Activated CD4-positive, alpha-beta T cell treated with anti-CD3 and anti-CD28 coated beads, Interleukin-2, amount 10 ng/mL, durations not matched to agents 24 days and 14 days (primary cell): ENCODE measurements at regions of chr2 and their contacts with region 1.

Region 1: DNA sequence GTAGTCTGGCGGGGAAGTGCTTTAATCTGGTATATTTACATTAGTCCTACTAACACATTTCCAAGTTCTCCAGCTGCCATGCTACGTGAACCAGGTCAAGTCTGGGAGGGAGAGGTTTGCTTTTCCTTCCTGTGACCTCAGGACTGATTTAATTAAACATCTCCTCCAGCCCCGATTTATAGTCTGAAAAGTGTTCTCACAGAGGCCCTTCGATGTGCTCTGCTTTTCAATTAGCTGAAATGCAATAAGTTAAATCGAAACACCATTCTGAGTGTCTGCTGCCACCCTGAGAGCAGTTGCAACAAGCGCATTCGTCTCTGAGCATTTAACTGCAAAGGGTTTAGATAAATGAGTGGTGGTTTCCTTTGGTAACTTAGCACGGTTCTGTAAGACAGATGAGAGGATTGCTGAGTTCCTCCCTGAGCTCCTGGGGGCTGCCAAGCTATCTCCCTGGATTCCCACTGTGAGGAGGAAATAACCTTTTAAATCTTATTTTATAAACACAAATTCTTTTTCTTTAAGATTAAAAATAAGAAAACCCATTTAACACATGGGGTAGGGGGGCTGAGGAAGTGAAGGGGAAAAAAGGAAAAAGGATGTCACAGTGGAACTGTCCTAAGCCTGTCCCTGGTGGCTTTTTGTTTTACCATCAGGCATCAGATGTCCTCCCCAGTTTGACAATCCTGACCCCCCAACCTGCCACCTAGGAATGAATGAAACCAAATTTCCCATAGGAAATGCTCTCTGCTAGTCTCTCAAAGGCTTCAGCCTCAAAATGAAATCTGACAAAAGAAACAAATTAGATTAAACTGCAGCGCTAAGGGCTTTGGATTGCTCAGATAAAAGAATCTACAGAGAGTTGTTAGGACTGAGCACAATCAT is 56.5 kb upstream of the CREB1 start:
- DNase-seq: peak; percentile 86
- H3K4me3 Mint-ChIP-seq: no peak overlapping the region
- H3K27ac Mint-ChIP-seq: peak overlapping the region; percentile 26
- H3K4me1 Mint-ChIP-seq: peaks cover 17% of the 10 kb centered on the region
- H3K27me3 Mint-ChIP-seq: peaks cover 2% of the 10 kb centered on the region

Region 2: GRCh38 chr2:206693399-206694137 is 779.7 kb before region 1 on chr2:
- intact Hi-C with region 1: loop called (anchors 1 kb)
- DNase-seq: peak; percentile 82
- H3K4me3 Mint-ChIP-seq: no peak overlapping the region
- H3K27ac Mint-ChIP-seq: no peak overlapping the region
- H3K4me1 Mint-ChIP-seq: no peaks in the 10 kb centered on the region
- H3K27me3 Mint-ChIP-seq: peaks cover 6% of the 10 kb centered on the region

Region 3: DNA sequence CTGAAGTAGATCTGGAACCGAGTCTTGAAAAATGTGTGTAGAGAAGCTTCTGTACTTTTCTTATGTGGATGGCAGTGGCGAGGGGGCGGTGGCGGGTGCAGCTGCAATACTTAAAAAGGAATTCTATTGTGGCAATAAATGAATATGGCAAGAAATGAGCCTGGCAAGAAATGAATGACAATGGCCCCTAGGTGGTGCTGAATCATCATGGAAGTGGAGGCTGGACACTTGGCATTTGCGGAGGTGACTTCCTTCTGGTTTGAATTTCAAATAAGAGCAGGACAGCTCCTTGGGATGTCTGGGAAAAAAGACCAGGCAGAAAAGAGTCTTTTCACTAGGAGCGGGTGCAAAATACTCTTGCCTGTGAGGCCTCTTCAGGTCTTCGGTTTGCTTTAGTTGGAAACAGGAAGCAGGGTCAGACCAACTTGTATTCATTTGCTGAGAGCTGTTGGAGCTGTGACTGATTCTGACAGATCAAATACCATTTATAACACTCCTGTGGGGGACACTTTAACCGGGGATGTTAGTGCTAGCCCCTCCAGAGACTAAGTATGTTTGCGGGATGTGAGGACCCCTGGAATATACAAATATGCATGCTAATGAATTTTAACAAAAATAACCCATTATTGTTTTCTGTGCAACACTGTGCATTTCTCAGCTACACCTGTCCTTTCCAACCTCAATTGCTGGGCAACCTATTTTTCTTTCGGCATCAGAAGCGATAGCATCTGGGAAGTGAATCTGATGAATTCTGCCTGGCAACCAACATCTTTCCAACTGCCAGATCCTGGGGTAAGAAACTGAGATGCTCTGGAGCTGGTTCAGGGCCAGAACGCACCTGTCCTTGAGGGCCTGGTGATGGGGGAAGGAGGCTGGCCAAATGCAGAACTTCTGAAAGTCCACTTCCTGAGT is 672.5 kb before region 1 on chr2:
- intact Hi-C with region 1: loop called (anchors 1 kb)
- DNase-seq: peak; percentile 86
- H3K4me3 Mint-ChIP-seq: peak overlapping the region; percentile 69
- H3K27ac Mint-ChIP-seq: peak overlapping the region; percentile 12
- H3K4me1 Mint-ChIP-seq: peaks cover 20% of the 10 kb centered on the region
- H3K27me3 Mint-ChIP-seq: no peaks in the 10 kb centered on the region

Region 4: GRCh38 chr2:207046724-207047123 is 426.6 kb before region 1 on chr2:
- intact Hi-C with region 1: loop called (anchors 1 kb)
- DNase-seq: peak; percentile 80
- H3K4me3 Mint-ChIP-seq: peak overlapping the region; percentile 28
- H3K27ac Mint-ChIP-seq: peak overlapping the region; percentile 31
- H3K4me1 Mint-ChIP-seq: peaks cover 12% of the 10 kb centered on the region
- H3K27me3 Mint-ChIP-seq: peaks cover 6% of the 10 kb centered on the region

Region 5: GRCh38 chr2:207238831-207239701 is 234.2 kb before region 1 on chr2:
- intact Hi-C with region 1: loop called (anchors 5 kb)
- DNase-seq: peak; percentile 73
- H3K4me3 Mint-ChIP-seq: peak overlapping the region; percentile 49
- H3K27ac Mint-ChIP-seq: peak overlapping the region; percentile 76
- H3K4me1 Mint-ChIP-seq: peaks cover 42% of the 10 kb centered on the region
- H3K27me3 Mint-ChIP-seq: no peaks in the 10 kb centered on the region

Region 6: DNA sequence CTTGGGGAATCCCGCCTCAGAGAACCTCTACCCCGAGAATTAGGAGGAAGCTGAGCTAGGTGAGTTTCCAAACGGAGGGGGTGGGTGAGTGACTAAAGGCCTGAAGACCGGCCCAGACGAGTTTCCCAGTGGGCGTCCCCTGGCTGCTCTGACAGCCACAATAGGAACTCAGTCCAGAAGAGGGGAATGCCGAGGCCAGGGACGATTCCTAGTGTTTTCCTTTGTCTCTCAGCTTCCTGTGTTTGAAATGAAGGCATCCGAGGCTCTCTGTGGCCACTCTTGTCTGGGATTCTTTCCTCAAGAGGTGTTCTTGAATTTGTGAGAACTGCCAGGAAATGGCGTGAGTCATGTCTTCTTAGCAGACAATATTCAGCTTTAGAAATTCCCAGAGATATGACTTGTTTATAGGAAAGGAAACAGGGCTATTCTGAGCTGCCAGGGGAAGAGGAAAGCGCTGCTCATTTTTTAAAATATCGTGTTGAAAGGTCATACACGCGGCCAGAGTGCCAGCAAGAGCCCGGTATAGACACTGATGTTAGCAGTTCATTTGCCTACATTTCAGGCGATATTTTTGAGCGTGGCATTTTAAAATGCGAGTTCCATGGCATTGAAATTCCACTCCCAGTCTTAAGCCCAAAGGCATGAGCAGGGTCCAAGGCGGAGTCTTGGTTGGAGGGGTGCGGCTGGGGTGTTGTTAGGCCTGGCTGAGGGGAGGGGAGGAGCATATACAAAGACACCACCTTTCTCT is 138.5 kb before region 1 on chr2:
- intact Hi-C with region 1: loop called (anchors 5 kb)
- DNase-seq: peak; percentile 68
- H3K4me3 Mint-ChIP-seq: peak overlapping the region; percentile 52
- H3K27ac Mint-ChIP-seq: peak overlapping the region; percentile 86
- H3K4me1 Mint-ChIP-seq: peaks cover 68% of the 10 kb centered on the region
- H3K27me3 Mint-ChIP-seq: no peaks in the 10 kb centered on the region